ENCODE measurements at regions of chr13 and their contacts with region 1.

Region 1: DNA sequence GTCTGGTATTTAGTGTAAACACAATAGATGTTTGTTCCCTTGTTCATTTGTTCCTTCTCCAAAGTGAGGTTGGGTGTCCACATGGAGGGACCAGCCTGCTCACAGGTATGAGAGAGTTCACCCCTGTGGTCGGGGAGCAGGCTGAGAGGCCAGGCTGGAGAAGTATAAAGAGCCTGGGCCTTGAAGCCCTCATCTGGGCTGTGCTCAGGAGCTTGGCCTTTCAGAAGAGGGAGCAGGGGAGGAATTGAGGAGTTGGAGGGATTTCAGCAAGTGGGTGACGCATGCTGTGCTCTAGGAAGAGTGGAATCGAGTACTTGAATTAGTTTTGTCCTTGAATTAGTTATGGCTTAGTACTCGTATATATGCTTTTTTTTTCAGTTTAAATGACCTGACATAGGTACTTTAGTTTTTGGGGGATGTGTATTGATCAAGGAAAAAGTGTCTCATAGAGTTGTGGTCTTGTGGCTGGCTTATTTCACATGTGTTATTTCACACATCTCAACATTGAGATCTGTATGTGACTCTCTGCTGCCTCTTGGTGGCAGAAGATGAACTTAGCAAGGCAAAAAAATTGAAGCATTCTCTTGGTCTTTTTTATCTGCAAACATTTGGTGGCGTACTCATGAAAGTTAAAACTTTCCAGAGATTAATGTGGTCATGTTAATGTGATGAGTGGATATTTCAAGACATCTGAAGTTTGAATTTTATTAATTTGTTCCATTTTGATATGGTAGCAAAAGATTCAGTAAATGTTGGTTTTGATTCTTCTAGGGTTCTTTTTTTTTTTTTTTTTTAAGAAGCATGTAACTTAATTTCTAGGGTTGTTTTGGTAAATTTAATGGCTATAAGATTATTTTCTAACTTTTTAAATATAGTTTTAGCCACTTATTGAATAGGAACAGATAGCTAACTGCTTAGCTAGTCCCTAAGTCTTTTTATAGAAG is 54.3 kb downstream of the SLAIN1 start:
- DNase-seq: peak; percentile 34
- ATAC-seq: peak; percentile 91
- H3K4me3 ChIP-seq: no peak overlapping the region
- H3K27ac ChIP-seq: no peak overlapping the region
- H3K4me1 ChIP-seq: no peaks in the 10 kb centered on the region
- H3K27me3 ChIP-seq: no peaks in the 10 kb centered on the region
- CTCF ChIP-seq: peak; percentile 77 to 90 (median 81)
- EP300 ChIP-seq: no peak
- POLR2A ChIP-seq: no peak
- RAD21 ChIP-seq: peak; percentile 94

Region 2: DNA sequence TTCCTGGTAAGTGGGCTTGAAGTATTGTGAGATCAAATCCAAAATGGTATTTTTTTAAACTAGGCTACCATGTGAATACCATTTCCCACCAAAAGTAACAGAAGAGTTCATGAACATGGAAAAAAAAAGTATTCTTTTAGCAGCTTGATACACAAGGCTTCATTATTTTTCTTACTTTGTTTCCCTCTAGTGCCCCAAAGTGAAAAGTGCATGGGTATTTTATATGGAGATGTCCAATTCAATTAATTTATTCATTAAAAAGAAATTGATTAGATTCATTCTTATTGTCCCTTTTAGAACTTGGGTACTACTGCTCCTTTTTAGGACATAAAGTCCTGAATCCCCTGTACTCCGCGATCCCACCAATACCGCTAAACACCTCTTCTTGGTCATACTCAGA is 244.9 kb before region 1 on chr13:
- CTCF ChIA-PET with region 1: no interaction called
- POLR2A ChIA-PET with region 1: no interaction called
- RAD21 ChIA-PET with region 1: no interaction called
- SMC1A ChIA-PET with region 1: no interaction called
- in situ Hi-C with region 1: loop called (anchors 5 kb)
- intact Hi-C with region 1: no loop called
- DNase-seq: no peak
- ATAC-seq: no peak
- H3K4me3 ChIP-seq: no peak overlapping the region
- H3K27ac ChIP-seq: no peak overlapping the region
- H3K4me1 ChIP-seq: peaks cover 17% of the 10 kb centered on the region
- H3K27me3 ChIP-seq: no peaks in the 10 kb centered on the region
- CTCF ChIP-seq: peak; percentile 16 to 32 (median 22); a peak in 3 of 6 replicates
- EP300 ChIP-seq: no peak
- POLR2A ChIP-seq: no peak
- RAD21 ChIP-seq: peak; percentile 18; the same call in 1 of the 2 replicates

Region 3: DNA sequence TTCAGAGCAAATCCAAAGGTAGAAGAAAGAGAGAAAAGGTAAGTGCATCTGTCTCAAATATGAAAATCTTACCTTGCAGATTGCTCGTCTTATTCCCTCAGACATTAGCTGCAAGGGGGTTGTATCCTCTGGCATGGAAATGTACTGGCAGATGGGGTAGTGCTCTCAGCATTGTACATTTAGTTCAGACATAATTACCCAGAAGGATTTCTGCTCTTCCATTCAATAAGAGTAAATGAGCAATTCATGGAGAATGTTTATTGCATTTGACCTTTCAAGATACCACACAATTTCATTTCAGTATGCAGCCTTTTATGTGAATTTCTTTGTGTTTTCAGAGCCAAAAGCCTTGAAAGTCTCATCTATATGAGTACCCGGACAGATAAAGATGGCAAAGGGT is 152.4 kb before region 1 on chr13:
- CTCF ChIA-PET with region 1: interaction called, 225 read pairs
- POLR2A ChIA-PET with region 1: interaction called, 3 read pairs
- RAD21 ChIA-PET with region 1: interaction called, 115 read pairs
- SMC1A ChIA-PET with region 1: interaction called, 102 read pairs
- in situ Hi-C with region 1: loop called (anchors 5 kb)
- intact Hi-C with region 1: no loop called
- DNase-seq: no peak
- ATAC-seq: no peak
- H3K4me3 ChIP-seq: no peak overlapping the region
- H3K27ac ChIP-seq: no peak overlapping the region
- H3K4me1 ChIP-seq: no peaks in the 10 kb centered on the region
- H3K27me3 ChIP-seq: peaks cover 0 to 7% of the 10 kb centered on the region in 2 experiments; a peak in 2 of 4 replicates
- CTCF ChIP-seq: no peak
- EP300 ChIP-seq: no peak
- POLR2A ChIP-seq: no peak
- RAD21 ChIP-seq: no peak

Region 4: DNA sequence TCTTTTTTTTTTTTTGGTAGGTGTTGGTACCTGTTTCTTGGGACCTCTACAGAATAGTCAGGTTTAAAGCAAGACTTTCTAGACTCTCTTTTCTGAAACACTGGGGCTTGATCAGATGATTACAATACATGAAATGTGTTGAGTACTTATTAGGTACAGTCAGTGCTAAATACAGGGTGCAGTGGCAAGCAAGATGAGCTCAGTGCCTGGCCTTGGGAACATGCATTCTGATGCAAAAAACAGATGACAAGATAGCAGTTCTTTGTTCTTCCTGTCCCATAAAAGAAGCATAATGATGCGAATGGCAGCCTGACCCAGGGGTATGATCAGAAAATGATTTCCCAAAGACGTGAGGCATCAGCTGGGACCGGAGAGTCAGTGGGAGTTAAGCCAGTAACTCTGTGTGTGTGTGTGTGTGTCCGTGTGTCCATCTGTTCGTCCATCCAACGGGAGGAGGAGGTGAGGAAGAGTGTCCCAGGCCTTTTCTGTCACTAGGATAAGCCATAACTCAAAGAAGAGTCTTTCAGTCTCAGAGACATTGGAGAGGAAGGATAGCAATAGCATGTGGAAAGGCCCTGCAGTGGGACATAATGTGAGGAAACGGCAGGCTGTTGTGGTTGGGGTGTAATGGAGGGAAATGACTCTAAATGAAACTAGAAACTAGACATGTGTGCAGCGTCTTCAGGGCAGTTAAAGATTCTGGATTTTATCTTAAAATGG is 22.1 kb before region 1 on chr13:
- CTCF ChIA-PET with region 1: interaction called, 3 read pairs
- POLR2A ChIA-PET with region 1: interaction called, 3 read pairs
- RAD21 ChIA-PET with region 1: interaction called, 10 read pairs
- SMC1A ChIA-PET with region 1: interaction called, 9 read pairs
- in situ Hi-C with region 1: no loop called
- intact Hi-C with region 1: no loop called
- DNase-seq: peak; percentile 64
- ATAC-seq: peak; percentile 97
- H3K4me3 ChIP-seq: peak overlapping the region; percentile 12; the same call in 1 of the 2 replicates
- H3K27ac ChIP-seq: peak overlapping the region; percentile 56
- H3K4me1 ChIP-seq: peaks cover 18% of the 10 kb centered on the region
- H3K27me3 ChIP-seq: no peaks in the 10 kb centered on the region
- CTCF ChIP-seq: no peak
- EP300 ChIP-seq: peak; percentile 78 to 89
- POLR2A ChIP-seq: no peak
- RAD21 ChIP-seq: peak; percentile 7; the same call in 1 of the 2 replicates

Region 5: DNA sequence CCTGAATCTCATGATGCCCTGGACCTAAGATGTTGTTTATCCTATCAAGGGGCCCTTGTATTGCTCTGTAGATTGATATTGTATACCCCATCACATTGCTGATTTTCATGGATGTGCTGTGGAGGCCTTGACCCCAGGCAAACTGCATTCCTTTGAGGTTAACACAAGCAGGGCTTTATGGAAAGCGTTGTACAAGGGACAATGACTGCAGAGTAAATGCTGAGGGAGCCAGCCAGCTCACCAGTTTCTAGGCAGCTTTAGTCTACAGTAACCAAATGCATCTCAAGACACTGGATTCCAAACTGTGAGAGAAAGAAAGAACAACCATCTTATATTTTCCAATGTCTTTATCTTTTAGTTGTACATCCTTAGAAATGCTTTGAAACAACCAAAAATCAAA is 200.9 kb after region 1 on chr13:
- CTCF ChIA-PET with region 1: no interaction called
- POLR2A ChIA-PET with region 1: no interaction called
- RAD21 ChIA-PET with region 1: no interaction called
- SMC1A ChIA-PET with region 1: no interaction called
- in situ Hi-C with region 1: no loop called
- intact Hi-C with region 1: no loop called
- DNase-seq: no peak
- ATAC-seq: no peak
- H3K4me3 ChIP-seq: no peak overlapping the region
- H3K27ac ChIP-seq: no peak overlapping the region
- H3K4me1 ChIP-seq: no peaks in the 10 kb centered on the region
- H3K27me3 ChIP-seq: no peaks in the 10 kb centered on the region
- CTCF ChIP-seq: no peak
- EP300 ChIP-seq: no peak
- POLR2A ChIP-seq: no peak
- RAD21 ChIP-seq: no peak

Measured in GM12878 (cell line).